HepG2 (cell line): ENCODE measurements at regions of chr17 and their contacts with region 1.

Region 1: DNA sequence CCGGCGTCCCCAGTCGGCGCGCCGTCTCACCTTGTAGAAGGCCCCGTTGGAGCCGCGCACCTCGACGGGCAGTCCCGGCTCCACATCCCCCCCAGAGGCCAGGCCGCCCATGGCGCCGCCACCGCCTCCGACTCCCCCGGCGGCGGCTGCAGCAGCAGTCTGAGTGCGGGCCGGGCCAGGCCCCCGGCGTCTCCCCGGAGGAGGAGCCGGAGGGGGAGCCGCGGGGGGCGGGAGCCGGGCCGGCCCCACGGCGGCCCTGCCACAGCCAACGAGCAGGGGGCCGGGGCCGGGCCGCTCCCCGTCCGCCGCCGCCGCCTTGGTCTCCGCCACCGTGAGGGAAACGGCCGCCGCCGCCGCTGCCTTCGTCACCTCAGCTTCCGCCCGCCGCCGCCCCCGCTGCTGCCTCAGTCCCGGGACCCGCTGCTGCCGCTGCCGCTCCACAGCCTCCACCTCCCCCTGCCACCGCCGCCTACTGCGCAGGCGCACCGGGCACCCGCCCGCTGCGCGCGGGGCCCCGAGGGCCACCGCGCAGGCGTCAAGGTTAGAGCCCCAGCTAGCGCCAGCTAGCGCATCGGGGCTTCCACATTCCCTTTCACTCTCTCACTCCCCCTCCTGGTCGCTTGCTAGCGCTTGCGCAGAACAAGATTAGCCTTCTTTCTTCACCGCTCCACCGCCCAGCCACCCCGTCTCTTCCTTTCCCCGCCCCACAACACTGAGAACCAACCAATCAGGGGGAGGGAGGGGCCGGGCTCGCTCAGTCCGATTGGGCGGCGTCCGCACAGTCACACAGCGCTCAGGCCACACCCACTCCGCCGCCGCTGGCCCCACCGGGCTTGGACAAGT is at the start of gene FXR2:
- DNase-seq: peak; percentile 99
- ATAC-seq: peak; percentile 94
- H3K4me3 ChIP-seq: peak within 1 kb of the TSS; percentile 64 to 92 (median 89)
- H3K27ac ChIP-seq: peak within 1 kb of the TSS; percentile 78
- H3K4me1 ChIP-seq: peaks cover 53% of the 10 kb centered on the region
- H3K27me3 ChIP-seq: no peaks in the 10 kb centered on the region
- CTCF ChIP-seq: peak; percentile 80
- EP300 ChIP-seq: peak in 1 of 2 experiments; percentile 22; a peak in 1 of 4 replicates
- POLR2A ChIP-seq: peak in 1 of 2 experiments; percentile 64
- RAD21 ChIP-seq: peak; percentile 58
- total RNA-seq, gene FXR2: 13.4 and 24.4 TPM in 2 replicates

Region 2: GRCh38 chr17:7572588-7573323 is 41.9 kb before region 1 on chr17:
- CTCF ChIA-PET with region 1: no interaction called
- POLR2A ChIA-PET with region 1: interaction called, 12 read pairs
- in situ Hi-C with region 1: no loop called
- intact Hi-C with region 1: no loop called
- DNase-seq: peak; percentile 98
- ATAC-seq: no peak; the same call in 2 of the 3 replicates
- H3K4me3 ChIP-seq: peak overlapping the region; percentile 89 to 96 (median 94)
- H3K27ac ChIP-seq: peak overlapping the region; percentile 93
- H3K4me1 ChIP-seq: peaks cover 51% of the 10 kb centered on the region
- H3K27me3 ChIP-seq: no peaks in the 10 kb centered on the region; a peak in 1 of 5 replicates
- CTCF ChIP-seq: 0 out of 2 replicates have a peak, but pooled peaks have one; percentile 2
- EP300 ChIP-seq: no peak
- POLR2A ChIP-seq: peak; percentile 96 to 98
- RAD21 ChIP-seq: no peak; the same call in none of the 2 replicates

Region 3: GRCh38 chr17:7583253-7584109 is 31.2 kb before region 1 on chr17 and contains the start of gene MPDU1:
- CTCF ChIA-PET with region 1: no interaction called
- POLR2A ChIA-PET with region 1: interaction called, 29 read pairs
- in situ Hi-C with region 1: no loop called
- intact Hi-C with region 1: loop called (anchors 1 kb)
- DNase-seq: peak; percentile 81
- ATAC-seq: peak; percentile 22
- H3K4me3 ChIP-seq: peak within 1 kb of the TSS; percentile 73 to 83 (median 77)
- H3K27ac ChIP-seq: peak within 1 kb of the TSS; percentile 96
- H3K4me1 ChIP-seq: peaks cover 55% of the 10 kb centered on the region
- H3K27me3 ChIP-seq: no peaks in the 10 kb centered on the region; a peak in 1 of 5 replicates
- CTCF ChIP-seq: peak; percentile 20; the same call in 1 of the 2 replicates
- EP300 ChIP-seq: 0 out of 4 replicates have a peak, but pooled peaks of 1 of the 2 experiments have one; percentile 18
- POLR2A ChIP-seq: peak; percentile 79 to 98
- RAD21 ChIP-seq: no peak
- total RNA-seq, gene MPDU1: 59.5 and 112 TPM in 2 replicates

Region 4: DNA sequence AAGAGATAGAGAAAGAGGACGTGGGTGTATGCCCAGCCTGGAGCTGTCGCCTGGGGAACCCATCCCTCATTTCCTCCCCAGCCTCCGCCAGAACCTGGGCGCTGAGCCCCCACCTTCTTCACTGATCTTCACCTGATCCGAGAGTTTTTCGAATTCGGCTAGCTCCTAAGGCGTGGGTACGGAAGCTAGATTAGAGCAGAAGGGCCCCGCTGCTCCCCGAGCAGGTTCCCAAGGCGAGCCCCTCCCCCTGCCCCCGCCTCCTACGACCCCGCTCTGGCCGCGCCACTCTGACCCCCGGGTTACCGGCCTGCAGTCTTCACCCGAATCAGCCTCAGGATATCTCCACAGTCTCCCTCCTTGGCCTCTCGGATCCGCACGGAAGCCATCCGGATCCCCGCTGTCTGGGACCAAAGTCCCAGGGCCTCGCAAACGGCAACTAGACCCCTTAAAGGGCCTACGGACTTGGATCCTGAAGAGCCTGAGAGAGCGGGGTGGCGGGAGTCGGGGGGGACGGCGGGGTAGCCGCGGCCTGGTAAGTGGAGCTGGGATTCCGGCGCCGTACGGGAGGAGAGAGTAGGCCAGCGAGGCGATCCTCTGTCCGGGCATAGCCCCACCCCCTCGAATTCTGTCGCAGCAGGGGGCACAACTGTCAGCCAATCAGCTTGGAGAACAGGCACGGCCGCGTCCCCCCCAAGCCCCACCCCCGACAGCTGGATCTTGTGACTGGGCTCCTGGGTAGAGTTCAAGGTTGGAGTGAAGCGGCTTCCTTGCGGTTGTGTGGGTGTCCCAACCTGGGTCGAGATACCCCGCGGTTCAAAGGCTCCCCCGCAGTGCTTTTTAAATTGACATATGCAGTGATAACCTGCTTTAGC is 12.8 kb after region 1 on chr17 and contains the start of gene SAT2:
- CTCF ChIA-PET with region 1: no interaction called
- POLR2A ChIA-PET with region 1: interaction called, 63 read pairs
- in situ Hi-C with region 1: no loop called
- intact Hi-C with region 1: no loop called
- DNase-seq: peak; percentile 95
- ATAC-seq: peak; percentile 85
- H3K4me3 ChIP-seq: peak within 1 kb of the TSS; percentile 82 to 92 (median 89)
- H3K27ac ChIP-seq: peak within 1 kb of the TSS; percentile 96
- H3K4me1 ChIP-seq: peaks cover 73% of the 10 kb centered on the region
- H3K27me3 ChIP-seq: no peaks in the 10 kb centered on the region; a peak in 1 of 5 replicates
- CTCF ChIP-seq: 0 out of 2 replicates have a peak, but pooled peaks have one; percentile 12
- EP300 ChIP-seq: peak; percentile 43 to 55; a peak in 3 of 4 replicates
- POLR2A ChIP-seq: peak; percentile 83 to 89
- RAD21 ChIP-seq: peak; percentile 21; the same call in 1 of the 2 replicates
- total RNA-seq, gene SAT2: 83.1 and 93.7 TPM in 2 replicates

Region 5: DNA sequence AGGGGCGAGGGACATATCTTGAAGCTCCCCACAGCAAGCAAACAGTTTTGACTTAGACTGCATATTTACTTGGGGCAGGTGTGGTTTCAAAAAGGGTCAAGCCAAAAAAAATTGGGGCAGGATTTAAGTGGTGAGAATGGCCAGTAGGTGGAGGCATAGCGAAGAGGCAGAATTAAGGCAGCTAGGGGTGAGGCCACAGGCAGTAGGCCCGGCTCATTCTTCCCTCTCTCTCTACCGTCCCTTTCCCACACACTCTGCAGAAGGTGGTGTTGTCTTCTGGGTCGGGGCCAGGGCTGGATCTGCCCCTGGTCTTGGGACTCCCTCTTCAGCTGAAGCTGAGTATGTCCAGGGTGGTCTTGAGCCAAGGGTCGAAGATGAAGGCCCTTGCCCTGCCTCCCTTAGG is 17.9 kb after region 1 on chr17:
- CTCF ChIA-PET with region 1: no interaction called
- POLR2A ChIA-PET with region 1: interaction called, 63 read pairs
- in situ Hi-C with region 1: no loop called
- intact Hi-C with region 1: no loop called
- DNase-seq: no peak
- ATAC-seq: peak; percentile 37
- H3K4me3 ChIP-seq: no peak overlapping the region
- H3K27ac ChIP-seq: peak overlapping the region; percentile 46
- H3K4me1 ChIP-seq: peaks cover 55% of the 10 kb centered on the region
- H3K27me3 ChIP-seq: no peaks in the 10 kb centered on the region; a peak in 1 of 5 replicates
- CTCF ChIP-seq: peak; percentile 55
- EP300 ChIP-seq: no peak
- POLR2A ChIP-seq: no peak
- RAD21 ChIP-seq: no peak